ENCODE measurements at regions of chr20 and their contacts with region 1.

Region 1: DNA sequence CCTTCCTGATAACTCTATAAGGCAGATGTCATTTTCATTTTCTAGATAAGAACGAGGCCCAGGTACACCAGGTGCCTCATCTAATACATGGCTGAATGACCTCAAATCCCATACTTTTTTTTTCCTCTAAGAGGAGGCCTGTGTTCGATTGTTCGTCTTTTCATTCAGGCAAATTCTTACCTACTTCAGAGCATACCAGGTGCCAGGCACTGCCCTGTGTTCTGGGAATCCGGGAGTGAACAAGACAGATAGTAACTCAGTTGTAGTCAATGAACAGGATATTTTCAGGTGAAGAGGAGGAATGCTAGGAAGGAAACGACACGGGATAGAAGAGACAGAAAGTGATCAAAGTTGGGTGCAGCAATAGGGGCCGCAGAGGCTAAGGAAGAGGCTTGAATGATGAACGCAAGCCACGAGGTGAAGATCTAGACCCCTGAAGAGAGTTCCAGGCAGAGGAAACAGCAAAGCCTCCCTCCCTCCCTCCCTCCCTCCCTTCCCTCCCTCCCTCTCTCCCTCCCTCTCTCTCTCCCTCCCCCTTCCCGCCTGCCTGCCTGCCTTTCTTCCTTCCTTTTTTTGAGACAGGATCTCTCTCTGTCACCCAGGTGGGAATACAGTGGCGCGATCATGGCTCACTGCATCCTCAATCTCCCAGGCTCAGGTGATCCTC is 150.1 kb upstream of the ZNF217 start:
- DNase-seq: no peak
- ATAC-seq: no peak
- H3K4me3 ChIP-seq: no peak overlapping the region
- H3K4me3 Mint-ChIP-seq: no peak overlapping the region
- H3K27ac ChIP-seq: no peak overlapping the region
- H3K27ac Mint-ChIP-seq: peak overlapping the region; percentile 27
- H3K4me1 ChIP-seq: peaks cover 37% of the 10 kb centered on the region in 2 donors
- H3K4me1 Mint-ChIP-seq: peaks cover 40% of the 10 kb centered on the region
- H3K27me3 ChIP-seq: no peaks in the 10 kb centered on the region
- H3K27me3 Mint-ChIP-seq: no peaks in the 10 kb centered on the region
- CTCF ChIP-seq: no peak

Region 2: DNA sequence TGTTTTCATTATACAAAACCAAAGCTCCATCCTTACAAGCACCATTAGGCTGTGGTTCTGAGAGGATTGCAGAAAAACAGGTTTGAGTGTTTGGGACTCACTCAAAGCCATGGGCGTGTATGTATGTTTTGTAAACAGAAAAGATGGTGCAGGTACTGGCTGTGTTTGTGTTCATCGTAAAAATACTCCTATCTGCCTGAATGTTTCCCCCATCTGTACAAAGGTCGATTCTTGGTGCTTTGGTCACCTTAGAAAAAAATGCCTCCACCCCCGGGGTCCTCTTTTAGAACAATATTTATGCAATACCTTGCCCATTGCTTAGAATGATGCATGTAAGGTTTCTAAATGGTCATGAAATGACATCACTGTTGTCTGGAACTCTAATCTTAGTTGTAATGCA is 485.0 kb before region 1 on chr20:
- CTCF ChIA-PET with region 1: no interaction called
- POLR2A ChIA-PET with region 1: no interaction called
- intact Hi-C with region 1: no loop called
- DNase-seq: no peak
- ATAC-seq: no peak
- H3K4me3 ChIP-seq: no peak overlapping the region
- H3K4me3 Mint-ChIP-seq: no peak overlapping the region
- H3K27ac ChIP-seq: no peak overlapping the region
- H3K27ac Mint-ChIP-seq: no peak overlapping the region
- H3K4me1 ChIP-seq: no peaks in the 10 kb centered on the region
- H3K4me1 Mint-ChIP-seq: no peaks in the 10 kb centered on the region
- H3K27me3 ChIP-seq: peaks cover 0 to 2% (median 0%) of the 10 kb centered on the region in 4 experiments
- H3K27me3 Mint-ChIP-seq: peaks cover 7% of the 10 kb centered on the region
- CTCF ChIP-seq: no peak

Region 3: DNA sequence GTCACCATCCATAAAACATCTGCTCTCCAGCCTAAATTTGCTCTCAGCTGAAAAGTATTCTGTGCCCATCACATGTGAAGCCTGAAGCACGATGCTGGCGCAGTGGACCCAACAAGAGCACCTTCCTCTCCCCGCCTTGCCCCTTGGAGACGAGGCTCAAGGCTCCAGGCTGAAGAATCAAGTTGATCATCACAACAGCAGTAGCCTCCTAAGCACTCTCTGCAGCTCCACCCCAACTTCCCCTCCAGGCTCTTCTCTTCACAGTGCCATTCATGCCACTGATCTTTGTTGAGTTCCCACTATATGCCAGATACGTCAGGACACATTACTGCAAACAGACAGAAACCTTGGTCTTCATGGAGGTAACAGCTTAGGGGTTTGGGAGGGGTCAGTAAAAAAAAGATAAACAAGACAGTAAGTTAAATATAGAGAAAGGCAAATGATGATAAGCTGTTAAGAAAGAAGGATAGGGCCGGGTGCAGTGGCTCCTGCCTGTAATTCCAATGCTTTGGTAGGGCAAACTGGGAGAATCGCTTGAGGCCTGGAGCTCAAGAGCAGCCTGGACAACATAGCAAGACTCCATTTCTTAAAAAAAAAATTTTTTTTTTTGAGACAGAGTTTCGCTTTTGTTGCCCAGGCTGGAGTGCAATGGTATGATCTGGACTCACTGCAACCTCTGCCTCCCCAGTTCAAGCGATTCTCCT is 108.4 kb before region 1 on chr20:
- CTCF ChIA-PET with region 1: no interaction called
- POLR2A ChIA-PET with region 1: interaction called, 12 read pairs
- intact Hi-C with region 1: no loop called
- DNase-seq: no peak
- ATAC-seq: no peak
- H3K4me3 ChIP-seq: no peak overlapping the region
- H3K4me3 Mint-ChIP-seq: peak overlapping the region; percentile 49
- H3K27ac ChIP-seq: peak overlapping the region; percentile 7 to 83
- H3K27ac Mint-ChIP-seq: peak overlapping the region; percentile 79
- H3K4me1 ChIP-seq: peaks cover 33 to 34% of the 10 kb centered on the region in 2 donors
- H3K4me1 Mint-ChIP-seq: peaks cover 36% of the 10 kb centered on the region
- H3K27me3 ChIP-seq: no peaks in the 10 kb centered on the region
- H3K27me3 Mint-ChIP-seq: no peaks in the 10 kb centered on the region
- CTCF ChIP-seq: no peak